Right lobe of liver (tissue), 6 donors: ENCODE measurements at regions of chr5 and their contacts with region 1.

Region 1: DNA sequence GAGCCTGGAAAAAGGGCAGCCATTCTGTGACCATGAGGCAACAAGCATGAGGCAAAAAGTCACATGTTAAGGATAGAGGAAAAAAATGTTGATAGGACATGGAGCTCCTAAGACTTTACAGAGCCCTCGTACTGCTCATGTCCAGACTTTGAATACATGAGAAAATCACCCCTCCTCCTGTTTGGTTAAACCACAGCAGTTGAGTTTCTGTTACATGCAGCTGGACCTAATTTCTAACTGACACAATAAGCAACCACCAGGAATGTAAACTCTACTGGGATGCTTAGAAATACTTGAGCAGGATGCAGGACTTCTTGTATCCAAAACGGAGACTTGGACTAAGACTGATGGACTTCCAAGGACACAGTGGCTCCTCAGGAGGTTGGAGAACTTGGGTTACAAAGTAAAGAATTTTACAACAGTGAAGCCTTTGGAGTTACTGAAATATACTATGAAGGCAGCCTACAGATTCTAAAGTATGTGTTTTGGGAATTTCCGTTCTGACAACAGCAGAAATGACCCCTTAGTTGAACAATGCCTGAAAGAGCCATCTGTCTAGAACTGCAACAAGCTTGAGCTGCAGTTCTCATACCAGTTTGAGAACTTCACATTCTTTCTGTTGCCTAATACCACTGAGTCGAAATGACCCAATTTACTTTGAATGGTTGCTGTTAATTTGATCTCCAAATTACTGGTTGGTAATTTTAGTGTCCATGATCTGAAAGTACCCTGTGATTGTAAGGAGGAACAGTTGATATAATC is 268.9 kb downstream of the PIK3R1 start:
- DNase-seq: no peak
- ATAC-seq: no peak
- H3K4me3 ChIP-seq: no peak overlapping the region
- H3K27ac ChIP-seq: no peak overlapping the region
- H3K4me1 ChIP-seq: no peaks in the 10 kb centered on the region
- H3K27me3 ChIP-seq: no peaks in the 10 kb centered on the region
- CTCF ChIP-seq: no peak
- POLR2A ChIP-seq: no peak

Region 2: DNA sequence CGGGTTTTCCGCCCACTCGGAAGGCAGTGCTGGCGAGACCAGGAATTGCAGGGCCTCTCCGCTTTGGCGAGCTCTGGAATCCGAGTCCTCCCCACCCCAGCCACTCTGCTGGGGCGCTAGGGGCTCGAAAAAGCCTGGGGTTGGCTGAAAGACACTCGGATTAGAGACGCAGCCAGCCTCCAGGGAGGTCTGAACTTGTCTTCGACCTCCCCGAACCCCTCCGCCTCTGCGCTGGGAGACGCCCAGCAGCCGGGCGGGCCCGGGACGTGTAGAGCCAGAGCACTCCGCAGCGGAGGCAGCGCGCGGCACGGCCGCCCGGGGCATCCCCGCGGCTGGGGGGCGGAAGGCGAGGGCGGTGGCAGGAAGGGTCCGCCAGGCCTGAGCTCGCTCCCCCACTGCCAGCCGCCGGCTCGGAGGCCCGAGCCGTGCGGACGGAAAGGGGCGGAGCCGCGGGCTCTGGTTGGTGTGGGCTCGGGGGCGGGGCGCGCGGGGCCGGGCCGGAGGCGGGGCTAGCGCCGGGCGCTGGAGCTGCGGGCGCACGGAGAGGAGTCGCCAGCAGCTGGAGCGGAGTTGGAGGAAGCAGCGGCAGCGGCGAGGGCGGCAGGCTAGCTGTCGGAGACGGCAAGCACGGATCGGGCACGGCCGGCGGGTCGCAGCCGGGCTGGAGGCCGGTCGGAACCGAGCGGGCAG is 269.1 kb before region 1 on chr5 and contains the start of gene PIK3R1:
- intact Hi-C with region 1: no loop called
- DNase-seq: peak; percentile 98
- ATAC-seq: peak; percentile 86 to 95 (median 88)
- H3K4me3 ChIP-seq: peak within 1 kb of the TSS; percentile 86 to 94 (median 90)
- H3K27ac ChIP-seq: peak within 1 kb of the TSS; percentile 93 to 95 (median 94)
- H3K4me1 ChIP-seq: peaks cover 0 to 30% (median 4%) of the 10 kb centered on the region in 4 donors
- H3K27me3 ChIP-seq: no peaks in the 10 kb centered on the region
- CTCF ChIP-seq: peak in 3 of 4 donors; percentile 26 to 59 (median 29)
- POLR2A ChIP-seq: peak; percentile 99
- total RNA-seq, gene PIK3R1: 36.3 to 173 (median 72.8) TPM

Region 3: DNA sequence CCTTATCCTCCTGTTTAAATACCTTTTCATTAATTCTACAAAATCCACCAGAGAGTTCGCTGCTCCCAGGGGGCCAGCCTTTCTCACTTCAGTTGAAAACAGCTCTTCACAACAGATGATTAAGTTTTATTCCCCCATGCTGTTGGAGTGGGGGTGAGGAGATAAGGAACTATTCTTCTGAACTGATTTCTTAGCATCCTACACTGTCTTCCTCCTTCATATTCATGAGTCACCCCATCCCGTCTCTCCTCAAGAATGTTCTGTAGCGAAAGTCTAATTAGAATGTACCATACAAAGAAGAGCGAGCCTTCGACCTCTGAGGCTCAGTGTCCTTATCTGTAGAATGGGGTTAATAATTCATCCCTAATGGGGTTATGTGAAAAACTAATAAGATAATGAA is 130.9 kb before region 1 on chr5:
- intact Hi-C with region 1: no loop called
- DNase-seq: no peak
- ATAC-seq: no peak
- H3K4me3 ChIP-seq: no peak overlapping the region
- H3K27ac ChIP-seq: no peak overlapping the region
- H3K4me1 ChIP-seq: no peaks in the 10 kb centered on the region
- H3K27me3 ChIP-seq: no peaks in the 10 kb centered on the region
- CTCF ChIP-seq: no peak
- POLR2A ChIP-seq: no peak

Region 4: GRCh38 chr5:68424799-68425537 is 59.5 kb before region 1 on chr5:
- intact Hi-C with region 1: no loop called
- DNase-seq: no peak
- ATAC-seq: peak; percentile 39 to 64 (median 48)
- H3K4me3 ChIP-seq: no peak overlapping the region
- H3K27ac ChIP-seq: no peak overlapping the region
- H3K4me1 ChIP-seq: peaks cover 0 to under 1% (median 0%) of the 10 kb centered on the region in 4 donors
- H3K27me3 ChIP-seq: no peaks in the 10 kb centered on the region
- CTCF ChIP-seq: no peak
- POLR2A ChIP-seq: no peak

Region 5: GRCh38 chr5:68548959-68549687 is 64.6 kb after region 1 on chr5:
- intact Hi-C with region 1: loop called in 1 of 2 experiments (anchors 10 kb)
- DNase-seq: no peak
- ATAC-seq: no peak
- H3K4me3 ChIP-seq: no peak overlapping the region
- H3K27ac ChIP-seq: no peak overlapping the region
- H3K4me1 ChIP-seq: no peaks in the 10 kb centered on the region
- H3K27me3 ChIP-seq: no peaks in the 10 kb centered on the region
- CTCF ChIP-seq: no peak
- POLR2A ChIP-seq: no peak

Region 6: GRCh38 chr5:68662804-68663307 is 178.4 kb after region 1 on chr5:
- intact Hi-C with region 1: no loop called
- DNase-seq: no peak
- ATAC-seq: no peak
- H3K4me3 ChIP-seq: no peak overlapping the region
- H3K27ac ChIP-seq: no peak overlapping the region
- H3K4me1 ChIP-seq: no peaks in the 10 kb centered on the region
- H3K27me3 ChIP-seq: no peaks in the 10 kb centered on the region
- CTCF ChIP-seq: no peak
- POLR2A ChIP-seq: no peak